PC-9 (cell line): ENCODE measurements at regions of chr17 and their contacts with region 1.

Region 1: GRCh38 chr17:39281806-39282205 is 56.1 kb upstream of the STAC2 start:
- DNase-seq: no peak
- H3K4me3 ChIP-seq: no peak overlapping the region
- H3K27ac ChIP-seq: peak overlapping the region; percentile 27
- H3K4me1 ChIP-seq: peaks cover 16% of the 10 kb centered on the region
- H3K27me3 ChIP-seq: no peaks in the 10 kb centered on the region
- CTCF ChIP-seq: no peak

Region 2: GRCh38 chr17:39443326-39443725 is 161.5 kb after region 1 on chr17:
- CTCF ChIA-PET with region 1: interaction called, 8 read pairs
- POLR2A ChIA-PET with region 1: interaction called, 10 read pairs
- intact Hi-C with region 1: no loop called
- DNase-seq: no peak
- H3K4me3 ChIP-seq: no peak overlapping the region
- H3K27ac ChIP-seq: no peak overlapping the region
- H3K4me1 ChIP-seq: no peaks in the 10 kb centered on the region
- H3K27me3 ChIP-seq: no peaks in the 10 kb centered on the region
- CTCF ChIP-seq: no peak